PC-3 (cell line): ENCODE measurements at regions of chr14 and their contacts with region 1.

Region 1: GRCh38 chr14:24366721-24367513 is 1.1 kb upstream of the NFATC4 start:
- DNase-seq: peak; percentile 95
- ATAC-seq: peak; percentile 66
- H3K4me3 ChIP-seq: peak overlapping the region; percentile 63
- H3K27ac ChIP-seq: peak overlapping the region; percentile 73
- H3K4me1 ChIP-seq: peaks cover 24% of the 10 kb centered on the region
- H3K27me3 ChIP-seq: no peaks in the 10 kb centered on the region
- CTCF ChIP-seq: no peak

Region 2: GRCh38 chr14:24207104-24207551 is 159.8 kb before region 1 on chr14:
- CTCF ChIA-PET with region 1: no interaction called
- POLR2A ChIA-PET with region 1: no interaction called
- intact Hi-C with region 1: no loop called
- DNase-seq: no peak
- ATAC-seq: no peak
- H3K4me3 ChIP-seq: no peak overlapping the region
- H3K27ac ChIP-seq: no peak overlapping the region
- H3K4me1 ChIP-seq: no peaks in the 10 kb centered on the region
- H3K27me3 ChIP-seq: no peaks in the 10 kb centered on the region
- CTCF ChIP-seq: no peak

Region 3: GRCh38 chr14:24332268-24332993 is 34.5 kb before region 1 on chr14:
- CTCF ChIA-PET with region 1: no interaction called
- POLR2A ChIA-PET with region 1: no interaction called
- intact Hi-C with region 1: loop called (anchors 2 kb)
- DNase-seq: peak; percentile 65
- ATAC-seq: peak; percentile 69
- H3K4me3 ChIP-seq: no peak overlapping the region
- H3K27ac ChIP-seq: no peak overlapping the region
- H3K4me1 ChIP-seq: peaks cover 5% of the 10 kb centered on the region; the same call in 1 of the 2 replicates
- H3K27me3 ChIP-seq: no peaks in the 10 kb centered on the region
- CTCF ChIP-seq: peak; percentile 76

Region 4: DNA sequence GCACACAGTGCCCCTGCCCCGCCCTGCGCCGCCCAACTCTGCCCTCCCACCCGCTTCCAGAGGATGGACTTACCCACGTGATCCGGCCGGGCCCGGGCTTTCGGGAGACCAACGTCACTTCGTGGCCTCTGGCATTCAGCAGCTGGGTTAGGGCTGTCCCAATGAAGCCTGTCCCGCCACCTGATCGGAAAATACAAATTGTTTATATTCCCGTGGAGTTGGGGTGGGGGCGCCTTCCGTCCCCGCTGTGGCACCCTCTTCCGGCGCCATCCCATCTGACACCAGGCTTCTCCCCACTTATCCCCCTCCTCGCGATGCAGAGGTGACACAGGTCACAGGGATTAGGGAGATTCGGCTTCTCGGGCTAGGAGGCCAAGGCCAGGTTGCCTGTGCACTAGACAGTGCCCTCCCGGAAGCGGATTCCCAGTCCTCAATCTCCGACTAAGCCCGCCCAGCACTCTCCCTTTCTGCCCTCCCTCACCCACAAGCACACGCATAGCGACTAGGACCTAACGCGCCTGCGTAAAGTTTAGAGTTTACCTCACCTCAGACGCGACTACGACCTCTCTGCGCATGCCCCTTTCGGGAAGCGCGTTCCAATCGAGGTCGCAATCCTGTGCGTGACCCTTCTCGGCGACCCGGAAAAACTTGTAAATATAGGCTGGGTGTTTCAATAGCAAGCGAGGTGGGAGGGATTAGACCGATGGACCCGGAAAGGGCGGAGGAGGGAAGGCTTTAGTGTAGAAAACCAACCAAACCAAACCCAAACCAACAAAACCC is 75.5 kb after region 1 on chr14 and contains the start of gene SDR39U1:
- CTCF ChIA-PET with region 1: interaction called, 3 read pairs
- POLR2A ChIA-PET with region 1: no interaction called
- intact Hi-C with region 1: loop called (anchors 2 kb)
- DNase-seq: peak; percentile 99
- ATAC-seq: peak; percentile 85
- H3K4me3 ChIP-seq: peak within 1 kb of the TSS; percentile 84
- H3K27ac ChIP-seq: peak within 1 kb of the TSS; percentile 97
- H3K4me1 ChIP-seq: peaks cover 10% of the 10 kb centered on the region
- H3K27me3 ChIP-seq: no peaks in the 10 kb centered on the region
- CTCF ChIP-seq: no peak
- total RNA-seq, gene SDR39U1: 24.7 and 29.8 TPM in 2 replicates